Transverse colon (tissue), 4 donors: ENCODE measurements at regions of chr6 and their contacts with region 1.

Region 1: DNA sequence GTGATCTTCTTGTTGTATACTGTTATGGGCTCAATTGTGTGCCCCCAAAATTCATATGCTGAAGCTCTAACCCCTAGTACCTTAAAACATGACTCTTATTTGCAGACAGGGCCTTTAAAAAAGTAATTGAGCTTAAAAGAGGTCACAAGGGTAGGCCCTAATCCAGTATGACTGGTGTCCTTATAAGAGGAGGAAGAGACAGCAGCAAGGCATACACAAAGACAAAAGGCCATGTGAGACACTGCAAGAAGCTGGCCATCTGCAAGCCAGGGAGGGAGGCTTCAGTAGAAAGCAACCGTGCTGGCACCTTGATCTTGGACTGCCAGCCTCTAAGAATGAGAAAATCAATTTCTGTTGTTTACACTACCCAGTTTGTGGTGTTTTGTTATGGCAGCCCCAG is 8.4 kb downstream of the CAGE1 start:
- DNase-seq: no peak
- H3K4me3 ChIP-seq: no peak overlapping the region
- H3K27ac ChIP-seq: no peak overlapping the region
- H3K4me1 ChIP-seq: no peaks in the 10 kb centered on the region
- H3K27me3 ChIP-seq: no peaks in the 10 kb centered on the region
- CTCF ChIP-seq: no peak
- EP300 ChIP-seq: no peak
- POLR2A ChIP-seq: no peak

Region 2: DNA sequence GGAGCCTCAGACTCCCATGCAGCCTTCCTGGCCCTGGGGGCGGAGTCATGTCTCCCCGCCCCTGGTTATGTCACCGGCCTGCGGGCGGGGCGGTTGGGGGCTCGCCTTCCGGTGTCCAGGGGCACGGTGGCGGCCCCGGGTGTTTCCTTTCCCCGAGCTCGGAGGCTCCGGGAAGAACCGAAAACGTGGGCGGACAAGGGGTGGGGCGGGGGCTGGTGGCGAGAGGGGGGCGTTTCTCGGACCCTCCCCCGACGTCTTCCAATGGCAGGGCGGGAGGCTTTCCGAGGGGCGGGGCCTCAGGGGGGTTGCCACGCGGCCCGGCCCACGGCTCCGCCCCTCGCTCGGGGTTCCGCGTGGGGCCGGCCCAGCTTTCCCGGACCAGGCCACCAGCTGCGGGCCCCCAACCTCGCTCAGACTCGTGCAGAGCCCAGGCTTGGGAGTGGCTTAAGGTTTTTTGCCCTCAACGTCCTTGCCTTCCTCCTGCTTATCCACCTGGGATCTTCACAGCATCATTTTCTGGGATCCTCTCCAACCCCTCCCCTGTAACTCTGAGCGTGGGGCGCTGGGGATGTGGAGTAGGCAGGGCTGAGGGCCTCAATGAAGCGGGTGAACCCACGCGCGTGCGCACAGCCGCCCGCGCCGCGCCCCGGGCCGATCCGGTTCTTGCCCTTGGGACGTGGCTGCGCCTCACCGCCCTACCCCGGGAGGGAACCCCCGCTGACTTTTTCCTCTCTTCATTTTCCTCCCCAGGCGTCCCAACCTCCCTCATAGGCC is 1372.3 kb before region 1 on chr6:
- in situ Hi-C with region 1: no loop called
- intact Hi-C with region 1: loop called (anchors 5 kb)
- DNase-seq: peak; percentile 66
- H3K4me3 ChIP-seq: peak overlapping the region; percentile 26 to 60 (median 36)
- H3K27ac ChIP-seq: peak overlapping the region; percentile 14 to 60 (median 34)
- H3K4me1 ChIP-seq: peaks cover 18 to 43% (median 24%) of the 10 kb centered on the region in 4 donors
- H3K27me3 ChIP-seq: peaks cover 98% of the 10 kb centered on the region
- CTCF ChIP-seq: no peak
- EP300 ChIP-seq: no peak
- POLR2A ChIP-seq: no peak

Region 3: DNA sequence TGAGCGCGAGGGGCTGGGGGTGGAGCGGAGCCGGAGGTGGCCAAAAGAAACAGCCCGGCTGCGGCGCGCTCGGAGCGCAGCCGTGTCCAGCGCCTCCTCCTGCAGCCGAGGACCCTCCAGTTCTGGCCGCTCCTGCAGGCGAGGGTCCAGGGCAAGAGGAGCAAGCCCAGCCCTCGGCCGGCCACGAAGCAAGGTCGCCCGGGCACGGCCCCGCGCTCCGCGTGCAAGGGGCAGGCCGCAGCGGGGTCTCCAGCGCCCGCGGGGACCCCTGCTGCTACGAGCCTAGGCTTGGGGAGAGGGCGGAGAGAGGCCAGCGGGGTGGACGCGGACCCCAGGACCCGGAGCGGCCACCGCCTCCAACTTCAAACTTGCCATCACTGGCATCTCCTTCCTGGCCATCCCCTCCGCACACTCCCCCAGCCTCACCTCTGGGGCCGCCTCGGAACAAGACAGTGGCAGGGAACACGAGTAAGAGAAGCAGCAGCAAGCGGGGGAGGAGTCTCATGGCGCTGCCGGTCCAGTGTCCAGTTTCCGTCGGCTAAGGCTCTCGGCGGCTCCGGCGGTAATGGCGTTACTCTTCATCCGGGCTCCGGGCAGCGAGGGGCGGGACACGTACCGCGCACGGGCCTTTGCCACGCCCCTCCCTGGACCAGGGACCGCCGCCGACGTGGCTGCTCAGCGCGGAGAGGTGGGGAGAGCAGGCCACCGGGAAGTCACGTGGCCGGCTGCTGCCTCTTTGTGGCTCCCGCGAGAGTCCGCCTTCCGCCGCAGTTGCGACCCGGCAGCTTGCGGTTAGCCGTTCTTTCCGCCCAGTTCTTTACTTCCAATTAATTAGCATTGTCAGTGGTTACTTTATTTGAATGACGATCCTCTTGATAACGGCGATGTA is 68.2 kb before region 1 on chr6 and contains the start of gene SSR1:
- in situ Hi-C with region 1: no loop called
- intact Hi-C with region 1: no loop called
- DNase-seq: peak; percentile 98
- H3K4me3 ChIP-seq: peak within 1 kb of the TSS; percentile 84 to 93 (median 86)
- H3K27ac ChIP-seq: peak within 1 kb of the TSS; percentile 90 to 98 (median 94)
- H3K4me1 ChIP-seq: peaks cover 9 to 33% (median 18%) of the 10 kb centered on the region in 4 donors
- H3K27me3 ChIP-seq: no peaks in the 10 kb centered on the region
- CTCF ChIP-seq: no peak
- EP300 ChIP-seq: no peak
- POLR2A ChIP-seq: peak; percentile 79
- total RNA-seq, gene SSR1: 12.7 to 68.9 (median 50.3) TPM

Region 4: DNA sequence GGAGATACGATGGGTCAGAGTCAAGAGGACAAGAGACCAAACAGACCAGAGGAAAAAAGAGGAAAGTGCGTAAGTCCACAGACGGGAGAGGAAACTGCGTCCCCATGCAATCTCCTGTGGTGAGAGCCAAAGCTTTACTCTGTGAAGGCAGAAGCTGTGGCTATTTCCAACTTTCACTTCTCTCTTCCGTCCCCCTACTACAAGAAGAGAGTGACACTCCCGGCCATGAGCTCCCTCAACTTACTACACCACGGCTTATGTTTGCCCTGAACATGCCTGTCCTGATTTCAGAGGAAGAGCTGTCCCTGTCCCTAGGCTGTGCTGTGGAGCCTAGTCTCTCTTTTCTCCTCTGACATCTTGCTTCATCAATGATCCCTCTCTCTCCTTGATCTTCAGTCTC is 56.6 kb before region 1 on chr6:
- in situ Hi-C with region 1: no loop called
- intact Hi-C with region 1: no loop called
- DNase-seq: peak; percentile 21
- H3K4me3 ChIP-seq: no peak overlapping the region
- H3K27ac ChIP-seq: no peak overlapping the region
- H3K4me1 ChIP-seq: no peaks in the 10 kb centered on the region
- H3K27me3 ChIP-seq: no peaks in the 10 kb centered on the region
- CTCF ChIP-seq: no peak
- EP300 ChIP-seq: no peak
- POLR2A ChIP-seq: no peak

Region 5: DNA sequence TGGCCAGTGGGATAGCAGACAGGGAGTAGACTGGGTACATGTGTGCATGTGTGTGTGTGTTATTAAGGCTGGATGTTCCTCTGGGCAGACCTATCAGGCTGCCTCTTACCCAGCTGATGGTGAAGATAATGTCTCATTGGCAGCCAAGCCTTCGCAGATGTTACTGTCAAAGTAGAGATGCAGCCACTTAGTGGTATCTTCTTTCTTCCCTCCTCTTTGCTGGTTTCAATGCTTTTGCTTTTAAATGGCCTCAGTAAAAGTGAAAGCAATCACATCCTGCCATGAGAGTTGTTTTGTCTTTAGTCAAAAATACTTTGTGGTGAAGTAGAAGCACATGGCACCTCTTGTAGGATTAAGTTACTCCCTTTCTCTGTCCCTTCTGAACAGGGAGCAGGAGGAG is 266.4 kb after region 1 on chr6:
- in situ Hi-C with region 1: no loop called
- intact Hi-C with region 1: no loop called
- DNase-seq: no peak
- H3K4me3 ChIP-seq: no peak overlapping the region
- H3K27ac ChIP-seq: no peak overlapping the region
- H3K4me1 ChIP-seq: no peaks in the 10 kb centered on the region
- H3K27me3 ChIP-seq: no peaks in the 10 kb centered on the region
- CTCF ChIP-seq: no peak
- EP300 ChIP-seq: no peak
- POLR2A ChIP-seq: no peak